Motor neuron (in vitro differentiated cells): ENCODE measurements at regions of chr9 and their contacts with region 1.

Region 1: DNA sequence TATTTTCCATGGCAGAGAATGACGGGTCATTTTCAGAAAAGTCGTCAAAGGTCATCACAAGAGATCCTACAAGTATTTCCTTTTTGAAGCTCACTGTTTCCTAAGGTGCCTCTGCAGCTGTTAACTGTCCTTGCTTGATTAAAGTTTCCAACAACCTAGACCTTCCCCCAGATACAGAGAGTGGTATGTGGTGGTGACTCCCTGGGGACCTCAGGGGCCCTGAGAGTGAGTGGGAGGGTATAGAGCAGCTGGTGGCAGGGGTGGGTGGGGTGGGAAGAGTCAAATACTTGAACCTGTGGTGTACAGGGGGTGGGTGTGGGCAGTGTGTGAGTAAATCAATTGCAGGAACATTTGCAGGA is 1.6 kb upstream of the CD72 start:
- ATAC-seq: no peak
- H3K4me3 ChIP-seq: no peak overlapping the region
- H3K27ac ChIP-seq: no peak overlapping the region
- H3K4me1 ChIP-seq: no peaks in the 10 kb centered on the region

Region 2: DNA sequence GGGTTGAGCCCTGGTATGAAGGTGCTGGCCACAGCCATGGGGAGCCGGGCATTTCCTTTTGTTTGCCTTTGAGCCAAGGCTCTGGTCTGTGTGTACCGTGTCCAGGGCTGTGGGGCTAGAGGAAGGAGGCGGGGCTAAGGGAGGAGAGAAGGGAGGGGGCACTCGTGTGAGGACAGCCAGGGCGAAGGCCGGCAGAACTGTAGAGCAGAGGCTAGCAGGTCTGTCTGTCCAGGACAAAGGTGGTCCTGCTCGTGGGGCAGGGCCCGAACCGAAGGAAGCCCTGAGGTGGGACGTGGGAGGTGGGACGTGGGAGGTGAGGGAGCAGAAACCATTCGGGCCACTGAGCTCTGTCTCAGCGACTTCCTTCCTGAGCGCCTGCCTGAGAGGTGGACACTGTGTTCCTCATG is 56.0 kb before region 1 on chr9:
- in situ Hi-C with region 1: loop called in 1 of 9 experiments (anchors 10 kb)
- ATAC-seq: peak in 7 of 8 experiments; percentile 27 to 93 (median 85)
- H3K4me3 ChIP-seq: no peak overlapping the region
- H3K27ac ChIP-seq: no peak overlapping the region
- H3K4me1 ChIP-seq: peaks cover 4 to 5% of the 10 kb centered on the region in 2 donors